WTC11 (cell line): ENCODE measurements at regions of chr1 and their contacts with region 1.

Region 1: DNA sequence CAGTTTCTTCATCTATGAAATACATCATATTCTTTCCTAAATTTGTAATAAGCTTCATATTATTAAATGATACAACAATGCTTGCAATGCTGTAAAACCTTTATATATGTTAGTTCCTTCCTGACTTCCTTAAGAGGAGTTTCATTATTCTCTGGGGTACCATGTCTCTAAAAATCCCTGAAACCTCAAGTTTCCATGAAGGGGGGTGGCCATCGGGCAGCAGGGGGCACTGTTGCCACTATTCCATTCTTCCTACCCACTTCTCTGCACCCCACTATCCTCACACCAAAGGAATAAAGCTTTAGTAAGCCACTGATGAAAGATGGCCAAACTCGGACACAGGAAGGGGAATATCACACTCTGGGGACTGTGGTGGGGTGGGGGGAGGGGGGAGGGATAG is 9.0 kb upstream of the DMRTB1 start:
- DNase-seq: peak; percentile 44
- ATAC-seq: no peak; the same call in 1 of the 2 replicates
- H3K4me3 Mint-ChIP-seq: no peak overlapping the region
- H3K27ac Mint-ChIP-seq: peak overlapping the region; percentile 95
- H3K4me1 Mint-ChIP-seq: peaks cover 75% of the 10 kb centered on the region
- H3K27me3 Mint-ChIP-seq: no peaks in the 10 kb centered on the region; the same call in 1 of the 2 replicates
- CTCF ChIP-seq: peak; percentile 53

Region 2: GRCh38 chr1:53430261-53430660 is 20.0 kb before region 1 on chr1:
- CTCF ChIA-PET with region 1: interaction called, 13 read pairs
- POLR2A ChIA-PET with region 1: no interaction called
- DNase-seq: no peak
- ATAC-seq: peak; percentile 9; the same call in 1 of the 2 replicates
- H3K4me3 Mint-ChIP-seq: peak overlapping the region; percentile 52
- H3K27ac Mint-ChIP-seq: peak overlapping the region; percentile 99
- H3K4me1 Mint-ChIP-seq: peaks cover 85% of the 10 kb centered on the region
- H3K27me3 Mint-ChIP-seq: peaks cover 33% of the 10 kb centered on the region
- CTCF ChIP-seq: no peak

Region 3: GRCh38 chr1:53465080-53465479 is 14.9 kb after region 1 on chr1:
- CTCF ChIA-PET with region 1: interaction called, 19 read pairs
- POLR2A ChIA-PET with region 1: interaction called, 3 read pairs
- DNase-seq: no peak
- ATAC-seq: no peak
- H3K4me3 Mint-ChIP-seq: no peak overlapping the region
- H3K27ac Mint-ChIP-seq: no peak overlapping the region
- H3K4me1 Mint-ChIP-seq: peaks cover 14% of the 10 kb centered on the region
- H3K27me3 Mint-ChIP-seq: peaks cover 20% of the 10 kb centered on the region
- CTCF ChIP-seq: no peak

Region 4: DNA sequence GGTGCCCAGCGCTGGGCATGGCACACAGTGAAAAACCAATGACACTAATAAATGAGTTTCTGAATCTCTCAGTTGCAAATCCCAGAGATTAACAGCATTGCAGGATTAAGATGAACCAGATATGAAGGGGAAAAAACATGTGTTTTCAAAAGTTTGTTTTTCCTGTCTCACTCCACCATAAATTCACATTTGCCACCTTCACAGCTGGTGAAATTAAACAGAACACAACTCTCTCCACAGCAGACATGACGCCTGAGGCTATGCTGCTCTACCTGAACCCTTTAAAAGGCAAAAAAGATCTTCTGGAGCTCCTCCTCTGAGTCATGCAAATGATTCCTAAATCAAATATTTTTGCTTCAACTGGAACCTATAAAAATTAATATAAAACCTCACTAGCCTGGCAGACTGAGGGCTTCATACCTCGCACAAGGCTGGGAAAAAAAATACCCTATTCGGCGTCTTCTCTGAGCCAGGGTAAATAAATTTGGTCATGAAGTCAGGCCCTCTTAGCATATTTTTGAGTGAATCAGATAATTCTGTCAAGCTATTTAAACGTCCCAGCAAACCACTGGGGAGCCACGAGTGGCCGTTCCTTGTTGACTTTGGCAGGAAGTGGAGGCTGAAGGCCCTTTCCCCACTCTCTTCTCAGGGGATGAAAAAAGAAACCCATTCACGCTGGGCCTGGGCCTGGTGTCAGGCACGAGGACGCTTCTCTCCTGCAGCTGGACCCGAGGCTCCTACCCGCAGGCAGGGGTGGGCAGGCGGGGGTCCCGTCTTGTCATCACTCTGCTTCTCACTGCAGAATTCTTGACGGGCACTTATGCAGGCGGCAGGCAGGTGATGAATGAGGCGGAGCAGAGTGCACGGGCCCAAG is 61.9 kb after region 1 on chr1:
- CTCF ChIA-PET with region 1: no interaction called
- POLR2A ChIA-PET with region 1: no interaction called
- DNase-seq: no peak
- ATAC-seq: no peak
- H3K4me3 Mint-ChIP-seq: no peak overlapping the region
- H3K27ac Mint-ChIP-seq: 0 out of 2 replicates have a peak overlapping the region, but pooled peaks have one; percentile 21
- H3K4me1 Mint-ChIP-seq: peaks cover 14% of the 10 kb centered on the region; the same call in 1 of the 2 replicates
- H3K27me3 Mint-ChIP-seq: no peaks in the 10 kb centered on the region
- CTCF ChIP-seq: no peak

Region 5: DNA sequence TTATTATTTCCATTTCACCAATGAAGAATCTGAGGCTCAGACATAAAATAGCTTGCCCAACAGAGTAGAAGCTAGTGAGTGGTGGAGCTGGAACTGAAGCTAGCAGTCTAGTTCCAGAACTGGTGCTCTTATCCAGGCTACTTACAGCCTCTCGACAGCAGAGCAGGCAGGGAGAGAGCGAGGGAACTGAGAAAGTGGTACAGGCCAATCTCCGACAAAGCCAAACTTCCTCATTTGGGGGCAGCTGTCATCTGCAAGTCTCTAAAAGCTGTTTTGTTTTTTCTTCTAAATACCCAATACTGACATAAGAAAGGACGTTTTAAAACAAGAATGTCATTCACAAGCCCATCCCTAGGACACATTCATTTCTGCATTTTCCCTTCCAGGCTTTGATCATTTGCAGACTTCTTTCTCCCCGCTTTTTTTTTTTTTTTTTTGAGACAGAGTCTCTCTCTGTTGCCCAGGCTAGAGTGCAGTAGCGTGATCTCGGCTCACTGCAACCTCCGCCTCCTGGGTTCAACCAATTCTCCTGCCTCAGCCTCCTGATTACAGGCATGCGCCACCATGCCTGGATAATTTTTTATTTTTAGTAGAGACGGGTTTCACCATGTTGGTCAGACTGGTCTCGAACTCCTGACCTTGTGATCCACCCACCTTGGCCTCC is 419.4 kb after region 1 on chr1:
- CTCF ChIA-PET with region 1: no interaction called
- POLR2A ChIA-PET with region 1: no interaction called
- DNase-seq: no peak
- ATAC-seq: no peak
- H3K4me3 Mint-ChIP-seq: no peak overlapping the region
- H3K27ac Mint-ChIP-seq: no peak overlapping the region
- H3K4me1 Mint-ChIP-seq: no peaks in the 10 kb centered on the region
- H3K27me3 Mint-ChIP-seq: no peaks in the 10 kb centered on the region
- CTCF ChIP-seq: no peak